Aorta (tissue), 5 donors: ENCODE measurements at regions of chr14 and their contacts with region 1.

Region 1: GRCh38 chr14:22319526-22320361 is 269.3 kb downstream of the DAD1 start:
- DNase-seq: peak in 1 of 2 donors; percentile 56
- ATAC-seq: peak; percentile 63
- H3K4me3 ChIP-seq: no peak overlapping the region
- H3K27ac ChIP-seq: no peak overlapping the region
- H3K4me1 ChIP-seq: no peaks in the 10 kb centered on the region
- H3K27me3 ChIP-seq: no peaks in the 10 kb centered on the region

Region 2: GRCh38 chr14:22370084-22370847 is 50.5 kb after region 1 on chr14:
- intact Hi-C with region 1: loop called (anchors 2 to 5 kb)
- DNase-seq: peak; percentile 79 to 81
- ATAC-seq: peak; percentile 78
- H3K4me3 ChIP-seq: no peak overlapping the region
- H3K27ac ChIP-seq: peak overlapping the region; percentile 22 to 86
- H3K4me1 ChIP-seq: peaks cover 0 to 4% of the 10 kb centered on the region in 2 donors
- H3K27me3 ChIP-seq: no peaks in the 10 kb centered on the region